ENCODE measurements at regions of chr2 and their contacts with region 1.

Region 1: DNA sequence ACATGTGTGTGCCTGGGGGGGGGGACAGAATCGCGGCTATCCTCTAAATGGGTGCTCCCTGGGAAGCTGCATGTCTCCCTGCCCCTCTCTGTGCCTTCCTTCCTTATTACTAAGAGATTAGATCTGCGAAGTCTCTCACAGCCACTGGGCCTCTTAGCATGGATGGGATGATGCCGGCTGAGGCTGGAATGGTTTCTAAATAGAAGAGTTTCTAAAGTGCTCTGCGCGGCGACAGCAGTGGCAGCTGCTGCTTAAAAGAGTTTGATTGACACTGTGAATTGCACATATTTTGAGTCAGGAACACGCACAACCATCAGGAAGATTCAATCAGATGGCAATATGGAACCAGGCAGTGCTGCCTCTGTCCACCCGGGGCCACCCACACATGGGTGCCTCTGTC is 163.8 kb downstream of the CLIP4 start:
- DNase-seq: no peak
- H3K4me3 ChIP-seq: no peak overlapping the region
- H3K27ac ChIP-seq: no peak overlapping the region
- H3K4me1 ChIP-seq: no peaks in the 10 kb centered on the region
- H3K27me3 ChIP-seq: no peaks in the 10 kb centered on the region
- CTCF ChIP-seq: no peak
- EP300 ChIP-seq: no peak
- POLR2A ChIP-seq: no peak

Region 2: DNA sequence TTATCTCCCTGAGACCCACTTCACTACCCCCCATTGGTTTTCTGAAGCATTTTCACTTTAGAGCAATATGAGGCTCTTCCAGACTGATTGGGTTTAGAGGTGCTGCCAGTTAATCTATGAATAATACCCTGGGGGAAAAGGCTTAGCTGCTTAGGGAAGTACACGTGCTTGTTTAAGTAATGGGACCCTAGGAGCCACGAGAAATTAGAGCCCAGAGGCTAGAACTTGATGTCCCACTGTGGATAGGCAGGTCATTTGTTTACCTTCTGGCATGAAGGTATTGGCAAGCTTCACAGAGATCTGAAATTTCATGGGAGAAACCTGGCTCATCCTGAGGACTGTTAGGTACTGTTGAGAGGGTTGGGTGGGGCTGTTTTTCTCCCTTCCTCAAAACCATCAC is 104.0 kb before region 1 on chr2:
- intact Hi-C with region 1: no loop called
- DNase-seq: no peak
- H3K4me3 ChIP-seq: no peak overlapping the region
- H3K27ac ChIP-seq: no peak overlapping the region
- H3K4me1 ChIP-seq: no peaks in the 10 kb centered on the region
- H3K27me3 ChIP-seq: no peaks in the 10 kb centered on the region
- CTCF ChIP-seq: no peak
- EP300 ChIP-seq: no peak
- POLR2A ChIP-seq: no peak

Region 3: GRCh38 chr2:31239593-31240177 is 1960.7 kb after region 1 on chr2:
- intact Hi-C with region 1: loop called in 1 of 4 experiments (anchors 5 kb)
- DNase-seq: no peak
- H3K4me3 ChIP-seq: no peak overlapping the region
- H3K27ac ChIP-seq: peak overlapping the region in 1 of 2 donors; percentile 12
- H3K4me1 ChIP-seq: peaks cover 2% of the 10 kb centered on the region
- H3K27me3 ChIP-seq: no peaks in the 10 kb centered on the region
- CTCF ChIP-seq: no peak
- EP300 ChIP-seq: no peak
- POLR2A ChIP-seq: no peak

Measured in ovary (tissue), 10 donors.